ENCODE measurements at regions of chr1 and their contacts with region 1.

Region 1: DNA sequence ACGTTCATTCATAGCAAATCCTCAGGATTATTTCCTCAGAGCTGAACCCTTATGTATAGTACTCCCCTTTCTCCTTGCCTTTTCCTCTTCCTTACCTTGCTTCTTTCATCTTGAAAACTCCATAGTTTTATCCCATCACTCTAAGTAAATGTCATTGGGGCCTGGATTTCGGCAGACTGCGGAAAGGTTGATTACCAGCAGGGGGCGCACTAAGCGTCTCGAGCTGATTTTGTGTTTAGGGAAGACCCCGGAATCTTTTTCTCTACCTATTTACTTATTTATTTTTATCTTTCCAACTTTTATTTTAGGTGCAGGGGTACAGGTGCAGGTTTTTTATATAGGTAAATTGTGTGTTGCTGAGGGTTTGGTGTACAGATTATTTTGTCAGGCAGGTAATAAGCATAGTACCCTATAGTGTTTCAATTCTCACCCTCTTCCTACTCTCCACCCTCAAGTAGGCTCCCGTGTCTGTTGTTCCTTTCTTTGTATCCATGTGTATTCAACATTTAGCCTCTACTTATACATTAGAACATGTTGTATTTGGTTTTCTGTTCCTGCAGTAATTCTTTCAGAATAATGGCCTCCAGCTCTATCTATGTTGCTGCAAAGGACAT is 11.4 kb upstream of the MTARC1 start:
- DNase-seq: no peak
- ATAC-seq: no peak

Region 2: GRCh38 chr1:220690140-220691025 is 85.0 kb before region 1 on chr1 and contains the start of gene C1orf115:
- intact Hi-C with region 1: loop called (anchors 2 kb)
- DNase-seq: peak; percentile 85
- ATAC-seq: peak; percentile 97
- total RNA-seq, gene C1orf115: 22.4 TPM

Measured in Right ventricle myocardium inferior (tissue), 1 donor.